ENCODE measurements at regions of chr19 and their contacts with region 1.

Region 1: DNA sequence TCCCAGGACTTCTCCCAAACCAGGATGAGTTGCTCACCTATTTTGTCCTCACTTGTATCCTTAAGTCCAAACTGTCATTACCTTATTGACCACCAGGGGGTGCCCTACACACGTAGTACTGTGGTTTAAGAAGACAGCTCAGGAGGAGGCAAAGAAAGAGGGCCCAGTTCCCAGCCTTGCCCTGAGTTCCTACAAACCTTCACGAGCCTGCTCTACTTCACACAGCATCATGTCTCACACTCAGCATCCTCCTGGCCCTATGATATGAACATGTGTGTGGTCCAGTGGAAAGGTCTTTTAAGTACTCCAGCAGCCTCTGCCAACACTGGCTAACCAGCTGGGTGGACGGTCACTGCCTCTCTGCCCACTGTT is 8.1 kb upstream of the ZNF784 start:
- DNase-seq: peak; percentile 84
- H3K4me3 ChIP-seq: no peak overlapping the region
- CTCF ChIP-seq: peak; percentile 76

Region 2: GRCh38 chr19:54189735-54190502 is 1442.5 kb before region 1 on chr19:
- CTCF ChIA-PET with region 1: no interaction called
- POLR2A ChIA-PET with region 1: no interaction called
- DNase-seq: peak; percentile 100
- H3K4me3 ChIP-seq: peak overlapping the region; percentile 89
- CTCF ChIP-seq: no peak

Region 3: DNA sequence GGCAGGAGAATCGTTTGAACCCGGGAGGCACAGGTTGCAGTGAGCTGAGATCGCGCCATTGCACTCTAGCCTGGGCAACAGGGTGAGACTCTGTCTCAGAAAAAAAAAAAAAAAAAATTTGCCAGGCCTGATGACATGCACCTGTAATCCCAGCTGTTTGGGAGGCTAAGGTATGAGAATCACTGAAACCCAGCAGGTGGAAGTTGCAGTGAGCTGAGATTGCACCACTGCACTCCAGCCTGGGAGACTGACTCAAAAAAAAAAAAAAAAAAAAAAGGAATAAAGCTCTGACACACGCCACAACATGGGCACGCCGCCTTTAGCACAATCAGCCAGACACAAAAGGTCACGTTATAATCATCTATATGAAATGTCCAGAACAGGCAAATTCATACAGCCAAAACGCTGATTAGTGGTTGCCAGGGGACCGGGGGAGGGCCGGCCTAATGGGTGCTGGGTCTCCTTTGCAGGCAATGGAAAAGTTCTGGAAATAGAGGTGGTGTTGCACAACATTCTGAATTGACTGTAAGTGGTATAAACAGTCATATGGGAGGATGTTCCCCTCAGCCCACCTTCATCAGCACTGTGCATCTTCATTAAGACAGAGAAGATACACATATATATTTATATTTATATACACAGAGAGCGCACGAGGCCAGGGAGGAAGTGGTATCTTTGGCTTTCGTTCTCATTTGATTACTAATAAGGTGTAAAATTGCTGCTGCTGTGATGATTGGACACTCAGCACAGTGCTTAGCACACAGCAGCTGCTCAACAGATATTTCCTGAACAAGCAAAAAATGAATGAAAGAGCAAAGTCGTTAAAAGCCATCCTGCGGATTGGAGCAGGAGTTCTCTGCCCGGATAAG is 356.4 kb before region 1 on chr19:
- CTCF ChIA-PET with region 1: no interaction called
- POLR2A ChIA-PET with region 1: no interaction called
- DNase-seq: no peak
- H3K4me3 ChIP-seq: no peak overlapping the region
- CTCF ChIP-seq: no peak

Region 4: GRCh38 chr19:55516878-55517620 is 115.4 kb before region 1 on chr19:
- CTCF ChIA-PET with region 1: interaction called, 53 read pairs
- POLR2A ChIA-PET with region 1: no interaction called
- DNase-seq: peak; percentile 40
- H3K4me3 ChIP-seq: peak overlapping the region; percentile 46
- CTCF ChIP-seq: peak; percentile 99

Region 5: DNA sequence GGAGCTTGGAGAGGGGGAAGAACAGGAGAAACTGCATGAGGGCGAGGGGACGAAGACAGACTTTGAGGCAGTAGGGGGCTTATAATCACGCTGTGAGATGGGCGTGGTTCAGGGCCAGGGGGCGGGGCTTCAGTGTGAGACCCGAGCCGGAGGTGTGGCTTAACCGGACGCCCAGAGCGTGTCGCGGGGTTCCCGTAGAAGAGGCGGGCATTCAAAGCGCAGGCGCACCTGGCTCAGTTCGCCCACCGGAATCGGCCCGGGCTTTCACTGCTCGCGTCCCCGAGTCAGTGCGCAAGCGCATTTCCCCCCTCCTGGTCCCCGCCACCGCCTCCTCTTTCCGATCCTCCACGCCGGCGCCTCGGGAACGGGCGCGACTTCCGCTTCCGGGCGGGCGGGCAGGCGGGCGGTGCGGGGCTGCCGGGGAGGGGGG is 27.2 kb before region 1 on chr19:
- CTCF ChIA-PET with region 1: interaction called, 36 read pairs
- POLR2A ChIA-PET with region 1: no interaction called
- DNase-seq: peak; percentile 65
- H3K4me3 ChIP-seq: peak overlapping the region; percentile 96
- CTCF ChIP-seq: no peak

Region 6: DNA sequence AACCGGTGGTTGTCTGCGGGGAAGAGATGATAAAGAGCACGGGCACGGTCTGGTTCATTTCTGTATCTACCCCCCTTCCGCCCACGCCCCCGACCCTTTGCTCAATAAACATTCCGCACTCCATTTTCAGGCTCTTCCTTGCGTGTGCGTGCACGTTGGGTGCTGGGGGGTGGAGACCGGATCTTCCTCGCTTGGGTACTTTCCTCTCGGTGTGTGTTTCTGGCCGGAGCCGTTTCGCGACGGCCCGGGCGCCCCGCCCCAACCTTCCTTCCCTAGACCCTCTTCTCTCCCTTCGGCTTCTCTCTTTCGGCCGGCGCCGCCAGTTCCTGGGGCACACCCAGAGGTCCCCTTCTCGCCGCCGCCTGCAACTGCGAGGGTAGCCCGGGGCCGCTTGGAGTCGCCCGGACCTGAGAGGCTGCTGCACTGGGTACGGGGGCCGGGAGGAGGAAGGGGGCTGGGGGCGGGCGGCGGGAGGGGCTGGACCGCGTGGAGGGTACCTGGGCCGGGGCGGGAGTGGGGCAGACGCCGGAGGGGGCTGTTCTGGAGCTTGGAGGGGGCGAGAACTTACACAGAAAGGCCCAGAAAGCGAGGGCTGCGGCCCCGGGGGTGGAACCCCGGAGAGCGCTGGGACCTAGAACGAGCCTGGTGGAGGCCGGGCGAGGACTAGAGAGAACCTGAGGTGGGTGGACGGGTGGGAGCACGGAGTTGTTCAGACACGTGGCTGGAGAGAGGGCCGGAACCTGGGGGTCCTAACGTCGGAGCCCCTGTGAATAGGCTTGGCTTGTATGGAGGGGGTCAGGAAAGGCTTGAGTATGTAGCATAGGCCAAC is 11.1 kb after region 1 on chr19 and contains the start of gene ZNF581:
- CTCF ChIA-PET with region 1: interaction called, 51 read pairs
- POLR2A ChIA-PET with region 1: interaction called, 8 read pairs
- DNase-seq: no peak
- H3K4me3 ChIP-seq: peak within 1 kb of the TSS; percentile 74
- CTCF ChIP-seq: no peak

Region 7: GRCh38 chr19:55670280-55671053 is 38.0 kb after region 1 on chr19:
- CTCF ChIA-PET with region 1: interaction called, 24 read pairs
- POLR2A ChIA-PET with region 1: no interaction called
- DNase-seq: no peak
- H3K4me3 ChIP-seq: no peak overlapping the region
- CTCF ChIP-seq: no peak

Measured in AG04449 (cell line).